IMR-90 (cell line): ENCODE measurements at regions of chr12 and their contacts with region 1.

Region 1: GRCh38 chr12:108193917-108194316 is 64.8 kb downstream of the WSCD2 start:
- DNase-seq: peak; percentile 3
- ATAC-seq: no peak
- H3K4me3 ChIP-seq: no peak overlapping the region
- H3K27ac ChIP-seq: no peak overlapping the region
- H3K4me1 ChIP-seq: no peaks in the 10 kb centered on the region
- H3K27me3 ChIP-seq: no peaks in the 10 kb centered on the region
- CTCF ChIP-seq: peak; percentile 50
- POLR2A ChIP-seq: no peak
- RAD21 ChIP-seq: peak; percentile 40

Region 2: DNA sequence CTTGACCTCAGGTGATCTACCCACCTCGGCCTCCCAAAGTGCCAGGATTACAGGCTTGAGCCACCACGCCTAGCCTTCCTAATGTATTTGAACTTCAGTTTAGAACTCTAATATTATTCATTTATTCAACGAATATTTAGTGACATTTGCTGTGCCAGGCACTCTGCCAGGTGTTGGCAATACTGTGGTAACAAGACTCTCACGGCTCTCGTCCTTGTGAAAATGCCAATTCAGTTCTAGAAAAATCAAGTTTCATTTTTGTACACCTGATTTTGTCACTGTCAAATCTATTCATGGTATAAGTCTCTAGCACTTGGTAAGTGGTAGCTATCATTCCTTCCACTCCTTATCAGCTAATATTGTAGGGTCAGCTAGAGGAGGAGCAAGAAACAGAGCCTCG is 514.6 kb before region 1 on chr12:
- CTCF ChIA-PET with region 1: no interaction called
- POLR2A ChIA-PET with region 1: no interaction called
- dilution Hi-C with region 1: no loop called
- in situ Hi-C with region 1: no loop called
- intact Hi-C with region 1: loop called (anchors 2 kb)
- DNase-seq: no peak
- ATAC-seq: no peak
- H3K4me3 ChIP-seq: no peak overlapping the region
- H3K27ac ChIP-seq: no peak overlapping the region
- H3K4me1 ChIP-seq: no peaks in the 10 kb centered on the region
- H3K27me3 ChIP-seq: peaks cover 30% of the 10 kb centered on the region
- CTCF ChIP-seq: no peak
- POLR2A ChIP-seq: no peak
- RAD21 ChIP-seq: no peak